A549 (cell line): ENCODE measurements at regions of chr20 and their contacts with region 1.

Region 1: GRCh38 chr20:58246346-58246745 is 17.9 kb upstream of the ANKRD60 start:
- DNase-seq: peak; percentile 25 to 67
- ATAC-seq: peak; percentile 70 to 86
- H3K4me3 ChIP-seq: no peak overlapping the region
- H3K27ac ChIP-seq: no peak overlapping the region
- H3K4me1 ChIP-seq: peaks cover 6% of the 10 kb centered on the region
- CTCF ChIP-seq: peak; percentile 51
- EP300 ChIP-seq: no peak
- POLR2A ChIP-seq: no peak
- RAD21 ChIP-seq: peak; percentile 52 to 62; a peak in 4 of 5 replicates

Region 2: DNA sequence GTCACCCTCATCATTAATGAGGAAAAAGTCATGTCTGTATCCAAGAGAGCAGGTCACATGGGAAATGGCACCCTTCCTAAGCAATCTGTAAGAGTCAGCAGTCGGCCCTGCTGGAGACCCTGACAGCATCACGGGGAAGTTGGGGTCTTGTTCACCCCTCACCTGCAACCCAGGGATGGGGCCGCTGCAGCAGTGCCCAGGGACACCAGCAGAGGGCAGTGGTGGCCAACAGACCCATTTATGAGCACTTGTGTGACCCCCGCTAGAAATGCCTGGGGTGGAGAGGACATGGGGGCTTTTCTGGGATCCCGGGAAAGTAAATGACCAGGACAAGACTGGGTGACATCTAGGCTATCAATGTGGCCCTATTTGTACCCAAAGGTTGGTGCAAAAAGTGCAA is 53.8 kb before region 1 on chr20:
- CTCF ChIA-PET with region 1: no interaction called
- POLR2A ChIA-PET with region 1: no interaction called
- DNase-seq: no peak
- ATAC-seq: peak in 1 of 2 experiments; percentile 58; a peak in 2 of 6 replicates
- H3K4me3 ChIP-seq: no peak overlapping the region
- H3K27ac ChIP-seq: no peak overlapping the region
- H3K4me1 ChIP-seq: no peaks in the 10 kb centered on the region
- CTCF ChIP-seq: peak; percentile 46
- EP300 ChIP-seq: no peak
- POLR2A ChIP-seq: no peak
- RAD21 ChIP-seq: peak; percentile 44 to 45; a peak in 3 of 5 replicates

Region 3: DNA sequence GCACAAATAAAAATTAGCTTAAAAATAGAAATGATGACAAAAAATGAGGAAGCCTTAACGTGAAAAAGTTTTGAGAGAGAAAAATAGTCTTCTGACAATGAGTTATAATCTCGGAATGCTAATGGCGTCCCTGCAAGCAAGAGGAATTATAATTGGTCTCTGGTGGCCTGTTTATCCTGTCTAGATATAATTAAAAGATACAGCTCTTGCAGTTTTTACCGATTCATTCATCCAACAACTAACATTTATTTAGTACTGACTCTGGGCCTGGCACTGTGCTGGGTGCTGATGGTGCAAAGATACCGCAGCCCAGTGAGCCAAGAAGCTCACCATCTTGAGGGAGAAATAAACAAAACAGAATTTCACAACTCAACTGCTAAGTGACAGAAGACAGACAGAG is 13.7 kb after region 1 on chr20:
- CTCF ChIA-PET with region 1: interaction called, 10 read pairs
- POLR2A ChIA-PET with region 1: no interaction called
- DNase-seq: no peak
- ATAC-seq: no peak
- H3K4me3 ChIP-seq: no peak overlapping the region
- H3K27ac ChIP-seq: no peak overlapping the region
- H3K4me1 ChIP-seq: no peaks in the 10 kb centered on the region
- CTCF ChIP-seq: no peak
- EP300 ChIP-seq: no peak
- POLR2A ChIP-seq: no peak
- RAD21 ChIP-seq: no peak

Region 4: DNA sequence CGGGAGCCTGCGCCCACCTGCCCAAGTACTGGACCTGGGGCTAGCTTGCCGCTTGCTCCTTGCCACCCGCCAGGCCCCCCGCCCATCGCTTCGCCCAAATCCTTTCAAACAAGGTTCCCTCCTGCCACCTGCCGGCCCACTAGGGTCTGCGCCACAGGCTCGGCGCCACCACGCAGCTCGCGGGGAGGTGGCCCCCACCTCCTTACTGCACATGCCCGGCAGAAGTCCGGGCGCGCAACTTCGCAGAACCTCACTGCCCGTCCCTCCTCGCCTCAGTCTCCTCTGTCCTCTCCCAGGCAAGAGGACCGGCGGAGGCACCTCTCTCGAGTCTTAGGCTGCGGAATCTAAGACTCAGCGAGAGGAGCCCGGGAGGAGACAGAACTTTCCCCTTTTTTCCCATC is 593.1 kb after region 1 on chr20:
- CTCF ChIA-PET with region 1: interaction called, 12 read pairs
- POLR2A ChIA-PET with region 1: no interaction called
- DNase-seq: peak; percentile 57 to 70
- ATAC-seq: peak; percentile 87 to 92
- H3K4me3 ChIP-seq: peak overlapping the region; percentile 46
- H3K27ac ChIP-seq: no peak overlapping the region
- H3K4me1 ChIP-seq: peaks cover 8% of the 10 kb centered on the region
- CTCF ChIP-seq: peak; percentile 60
- EP300 ChIP-seq: no peak
- POLR2A ChIP-seq: no peak
- RAD21 ChIP-seq: peak; percentile 71 to 81